Heart right ventricle (tissue), 16 donors: ENCODE measurements at regions of chr4 and their contacts with region 1.

Region 1: DNA sequence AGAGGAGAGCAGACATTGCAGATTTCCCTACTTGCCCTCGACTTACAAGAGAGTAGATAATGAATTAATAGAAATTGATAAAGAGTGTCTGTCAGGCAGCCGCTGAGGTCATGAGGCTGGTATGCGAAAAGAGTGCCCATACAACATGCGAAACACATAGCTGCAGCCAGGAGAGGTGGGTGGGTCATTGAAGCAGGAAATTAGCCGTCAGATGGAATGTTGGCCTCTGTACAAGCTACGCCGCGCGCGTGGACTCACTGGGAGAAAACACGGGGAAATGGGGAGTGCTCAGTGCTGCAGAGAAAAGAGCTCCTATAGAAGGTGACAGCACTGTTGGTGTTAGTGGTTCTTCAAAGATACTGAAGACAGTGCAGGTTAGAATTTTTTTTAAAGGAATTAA is 125.1 kb downstream of the RAPGEF2 start:
- DNase-seq: peak; percentile 74 to 84
- ATAC-seq: peak; percentile 88 to 94 (median 93)
- H3K4me3 ChIP-seq: peak overlapping the region in 9 of 10 donors; percentile 24 to 57 (median 41)
- H3K27ac ChIP-seq: peak overlapping the region; percentile 41 to 91 (median 82)
- H3K4me1 ChIP-seq: peaks cover 0 to 74% (median 29%) of the 10 kb centered on the region in 9 donors
- H3K27me3 ChIP-seq: no peaks in the 10 kb centered on the region
- CTCF ChIP-seq: peak in 5 of 9 donors; percentile 11 to 46 (median 40)

Region 2: GRCh38 chr4:159248384-159249178 is 20.6 kb after region 1 on chr4:
- intact Hi-C with region 1: no loop called
- DNase-seq: no peak
- ATAC-seq: peak; percentile 62 to 91 (median 85)
- H3K4me3 ChIP-seq: peak overlapping the region in 9 of 10 donors; percentile 11 to 54 (median 35)
- H3K27ac ChIP-seq: peak overlapping the region in 9 of 10 donors; percentile 34 to 79 (median 61)
- H3K4me1 ChIP-seq: peaks cover 4 to 61% (median 35%) of the 10 kb centered on the region in 9 donors
- H3K27me3 ChIP-seq: no peaks in the 10 kb centered on the region
- CTCF ChIP-seq: no peak

Region 3: DNA sequence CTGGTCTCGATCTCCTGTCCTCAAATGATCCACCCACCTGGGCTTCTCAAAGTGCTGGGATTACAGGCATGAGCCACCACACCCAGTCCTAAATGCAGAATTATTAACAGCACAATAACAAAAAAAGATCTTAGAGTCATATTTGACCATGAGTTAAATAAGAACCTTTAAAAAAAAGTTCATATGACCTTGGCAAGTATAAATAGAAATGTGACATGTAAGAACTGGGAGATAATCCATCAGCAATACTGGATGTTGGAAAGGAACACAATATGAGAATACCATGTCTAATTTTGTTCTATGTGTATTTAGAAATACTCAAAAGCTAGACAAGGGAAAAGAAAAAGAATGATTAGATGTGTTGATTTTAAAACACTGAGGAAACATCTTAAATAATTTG is 106.5 kb after region 1 on chr4:
- intact Hi-C with region 1: loop called in 1 of 10 experiments (anchors 10 kb)
- DNase-seq: no peak
- ATAC-seq: peak; percentile 29 to 87 (median 62)
- H3K4me3 ChIP-seq: no peak overlapping the region
- H3K27ac ChIP-seq: peak overlapping the region in 8 of 10 donors; percentile 11 to 82 (median 61)
- H3K4me1 ChIP-seq: peaks cover 0 to 15% (median 10%) of the 10 kb centered on the region in 9 donors
- H3K27me3 ChIP-seq: no peaks in the 10 kb centered on the region
- CTCF ChIP-seq: no peak

Region 4: GRCh38 chr4:159400558-159401225 is 172.7 kb after region 1 on chr4:
- intact Hi-C with region 1: no loop called
- DNase-seq: peak in 1 of 2 donors; percentile 13
- ATAC-seq: peak in 5 of 8 donors; percentile 23 to 60 (median 33)
- H3K4me3 ChIP-seq: peak overlapping the region in 7 of 10 donors; percentile 1 to 38 (median 24)
- H3K27ac ChIP-seq: peak overlapping the region; percentile 21 to 84 (median 64)
- H3K4me1 ChIP-seq: peaks cover 8 to 56% (median 29%) of the 10 kb centered on the region in 9 donors
- H3K27me3 ChIP-seq: no peaks in the 10 kb centered on the region
- CTCF ChIP-seq: no peak